A673 (cell line): ENCODE measurements at regions of chr12 and their contacts with region 1.

Region 1: DNA sequence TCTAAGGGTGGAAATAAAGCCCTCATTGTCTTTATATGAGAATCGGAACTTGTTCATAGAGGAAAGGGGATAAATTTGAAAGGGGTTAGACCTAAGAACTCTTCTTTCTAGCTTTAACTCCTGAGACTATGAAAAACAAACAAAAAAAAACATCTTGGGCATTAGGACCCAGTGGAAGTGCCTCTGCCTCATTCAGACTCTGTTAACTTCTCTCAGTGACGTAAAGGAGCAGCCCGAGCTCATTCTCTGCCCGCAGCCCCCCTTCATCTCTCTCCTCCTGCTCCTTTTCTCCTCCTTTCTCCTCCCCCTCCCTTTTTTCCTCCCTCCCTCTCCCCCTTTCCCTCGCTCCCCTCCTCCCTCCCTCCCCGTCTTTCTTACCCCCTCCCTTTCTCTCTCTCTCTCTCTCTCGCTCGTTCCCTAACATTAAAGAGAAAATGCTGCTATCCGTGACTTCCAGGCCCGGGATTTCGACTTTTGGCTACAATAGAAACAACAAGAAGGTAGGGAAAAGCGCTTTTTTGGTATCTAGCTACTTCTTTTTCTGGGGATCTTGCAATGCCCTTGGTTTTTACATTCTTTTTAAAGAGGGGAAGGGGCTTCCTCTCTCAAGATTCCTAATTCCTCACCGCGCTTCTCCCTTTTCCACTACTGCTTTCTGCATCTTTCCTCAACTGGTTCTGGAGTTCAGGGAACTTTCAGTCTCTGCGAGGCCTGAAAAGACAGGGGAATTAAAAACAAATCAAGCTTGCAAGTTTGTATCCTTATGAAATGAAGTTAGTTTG is at the start of gene RBMS2:
- DNase-seq: peak; percentile 95
- H3K4me3 ChIP-seq: peak within 1 kb of the TSS; percentile 54
- H3K27ac ChIP-seq: peak within 1 kb of the TSS; percentile 83
- H3K4me1 ChIP-seq: peaks cover 25% of the 10 kb centered on the region
- H3K27me3 ChIP-seq: no peaks in the 10 kb centered on the region
- CTCF ChIP-seq: no peak
- total RNA-seq, gene RBMS2: 29.7 and 37.5 TPM in 2 replicates

Region 2: GRCh38 chr12:55847603-55848291 is 674.0 kb before region 1 on chr12:
- CTCF ChIA-PET with region 1: no interaction called
- POLR2A ChIA-PET with region 1: interaction called, 17 read pairs
- intact Hi-C with region 1: no loop called
- DNase-seq: peak; percentile 77
- H3K4me3 ChIP-seq: no peak overlapping the region
- H3K27ac ChIP-seq: peak overlapping the region; percentile 46
- H3K4me1 ChIP-seq: peaks cover 21% of the 10 kb centered on the region
- H3K27me3 ChIP-seq: no peaks in the 10 kb centered on the region
- CTCF ChIP-seq: no peak

Region 3: GRCh38 chr12:56571126-56571525 is 49.3 kb after region 1 on chr12:
- CTCF ChIA-PET with region 1: interaction called, 5 read pairs
- POLR2A ChIA-PET with region 1: no interaction called
- intact Hi-C with region 1: loop called (anchors 2 kb)
- DNase-seq: no peak
- H3K4me3 ChIP-seq: no peak overlapping the region
- H3K27ac ChIP-seq: no peak overlapping the region
- H3K4me1 ChIP-seq: no peaks in the 10 kb centered on the region
- H3K27me3 ChIP-seq: no peaks in the 10 kb centered on the region
- CTCF ChIP-seq: no peak

Region 4: GRCh38 chr12:56636675-56637540 is 115.1 kb after region 1 on chr12:
- CTCF ChIA-PET with region 1: interaction called, 18 read pairs
- POLR2A ChIA-PET with region 1: interaction called, 3 read pairs
- intact Hi-C with region 1: no loop called
- DNase-seq: peak; percentile 100
- H3K4me3 ChIP-seq: peak overlapping the region; percentile 77
- H3K27ac ChIP-seq: peak overlapping the region; percentile 78
- H3K4me1 ChIP-seq: peaks cover 35% of the 10 kb centered on the region
- H3K27me3 ChIP-seq: no peaks in the 10 kb centered on the region
- CTCF ChIP-seq: peak; percentile 82